ENCODE measurements at regions of chr17 and their contacts with region 1.

Region 1: GRCh38 chr17:61040666-61041065 is 359.0 kb upstream of the TBX2 start:
- DNase-seq: no peak
- ATAC-seq: no peak
- H3K4me3 Mint-ChIP-seq: no peak overlapping the region
- H3K27ac Mint-ChIP-seq: no peak overlapping the region
- H3K4me1 Mint-ChIP-seq: no peaks in the 10 kb centered on the region
- H3K27me3 Mint-ChIP-seq: no peaks in the 10 kb centered on the region
- CTCF ChIP-seq: no peak

Region 2: GRCh38 chr17:61057257-61057656 is 16.6 kb after region 1 on chr17:
- CTCF ChIA-PET with region 1: no interaction called
- POLR2A ChIA-PET with region 1: no interaction called
- intact Hi-C with region 1: loop called (anchors 1 kb)
- DNase-seq: no peak
- ATAC-seq: no peak
- H3K4me3 Mint-ChIP-seq: no peak overlapping the region
- H3K27ac Mint-ChIP-seq: no peak overlapping the region
- H3K4me1 Mint-ChIP-seq: no peaks in the 10 kb centered on the region
- H3K27me3 Mint-ChIP-seq: no peaks in the 10 kb centered on the region
- CTCF ChIP-seq: no peak